Gastrocnemius medialis (tissue), 4 donors: ENCODE measurements at regions of chr11 and their contacts with region 1.

Region 1: GRCh38 chr11:45298718-45299117 is 12.6 kb upstream of the SYT13 start:
- DNase-seq: no peak
- ATAC-seq: no peak
- H3K4me3 ChIP-seq: no peak overlapping the region
- H3K27ac ChIP-seq: no peak overlapping the region
- H3K4me1 ChIP-seq: no peaks in the 10 kb centered on the region
- H3K27me3 ChIP-seq: no peaks in the 10 kb centered on the region
- CTCF ChIP-seq: no peak
- POLR2A ChIP-seq: no peak

Region 2: DNA sequence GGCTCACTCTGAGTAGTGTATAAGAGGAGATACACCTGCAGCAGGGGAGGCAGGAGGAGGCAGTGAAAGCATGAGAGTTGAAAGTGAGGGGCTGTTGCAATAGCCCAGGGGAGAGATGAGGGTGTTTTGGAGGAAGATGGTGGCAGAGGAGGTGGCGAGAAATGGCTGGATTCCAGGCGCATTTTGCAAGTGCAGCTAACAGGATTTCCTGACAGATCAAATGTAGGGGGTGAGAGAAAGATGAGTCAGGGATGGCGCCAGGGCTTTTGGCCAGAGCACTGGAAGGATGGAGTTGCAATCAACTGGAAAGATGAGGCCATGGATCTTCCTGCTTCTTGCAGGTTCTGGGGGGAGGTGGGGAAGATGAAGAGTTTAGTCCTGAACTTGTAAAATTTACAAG is 588.8 kb before region 1 on chr11:
- in situ Hi-C with region 1: no loop called
- intact Hi-C with region 1: no loop called
- DNase-seq: no peak
- ATAC-seq: no peak
- H3K4me3 ChIP-seq: no peak overlapping the region
- H3K27ac ChIP-seq: no peak overlapping the region
- H3K4me1 ChIP-seq: no peaks in the 10 kb centered on the region
- H3K27me3 ChIP-seq: no peaks in the 10 kb centered on the region
- CTCF ChIP-seq: no peak
- POLR2A ChIP-seq: no peak

Region 3: DNA sequence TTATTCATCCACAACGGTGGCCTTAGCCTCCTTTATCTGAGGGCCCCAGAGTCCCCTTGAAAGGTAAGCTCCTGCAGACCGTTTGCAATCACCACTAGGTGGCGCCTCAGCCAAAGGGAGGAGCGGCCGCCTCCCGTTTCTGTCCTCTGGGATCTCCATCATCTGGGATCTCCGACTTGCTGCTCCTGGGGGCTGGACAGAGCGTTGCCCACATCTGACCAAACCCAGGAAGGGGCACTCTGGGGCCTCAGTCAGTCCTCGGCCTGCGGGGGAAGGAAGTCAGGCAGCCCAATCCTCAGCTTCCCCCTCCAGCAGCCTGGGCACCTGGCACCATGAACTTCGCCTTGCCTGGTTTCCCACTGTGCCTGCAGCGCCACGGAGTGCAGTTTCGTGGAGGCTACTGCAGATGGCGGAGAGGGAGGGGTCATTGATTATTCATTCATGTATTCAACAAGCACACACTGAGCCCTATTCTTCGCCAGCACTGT is 371.5 kb before region 1 on chr11:
- in situ Hi-C with region 1: loop called in 3 of 4 experiments (anchors 10 to 25 kb)
- intact Hi-C with region 1: no loop called
- DNase-seq: peak; percentile 21 to 35
- ATAC-seq: peak; percentile 53 to 71
- H3K4me3 ChIP-seq: no peak overlapping the region
- H3K27ac ChIP-seq: no peak overlapping the region
- H3K4me1 ChIP-seq: peaks cover 0 to 10% of the 10 kb centered on the region in 2 donors
- H3K27me3 ChIP-seq: no peaks in the 10 kb centered on the region
- CTCF ChIP-seq: peak; percentile 61 to 90 (median 76)
- POLR2A ChIP-seq: no peak

Region 4: GRCh38 chr11:45354976-45355705 is 56.4 kb after region 1 on chr11:
- in situ Hi-C with region 1: no loop called
- intact Hi-C with region 1: no loop called
- DNase-seq: peak; percentile 41 to 67
- ATAC-seq: peak; percentile 62 to 83
- H3K4me3 ChIP-seq: peak overlapping the region; percentile 70 to 92 (median 76)
- H3K27ac ChIP-seq: peak overlapping the region; percentile 52 to 67 (median 61)
- H3K4me1 ChIP-seq: peaks cover 6 to 7% of the 10 kb centered on the region in 2 donors
- H3K27me3 ChIP-seq: peaks cover 0 to 3% (median 0%) of the 10 kb centered on the region in 3 donors
- CTCF ChIP-seq: peak in 1 of 5 experiments; percentile 3
- POLR2A ChIP-seq: no peak